HepG2 (cell line): ENCODE measurements at regions of chr1 and their contacts with region 1.

Region 1: GRCh38 chr1:213419369-213420030 is 368.5 kb downstream of the RPS6KC1 start:
- DNase-seq: peak; percentile 49
- ATAC-seq: peak; percentile 82
- H3K4me3 ChIP-seq: no peak overlapping the region
- H3K27ac ChIP-seq: no peak overlapping the region
- H3K4me1 ChIP-seq: peaks cover 42% of the 10 kb centered on the region
- H3K27me3 ChIP-seq: no peaks in the 10 kb centered on the region
- CTCF ChIP-seq: peak; percentile 59
- EP300 ChIP-seq: no peak
- POLR2A ChIP-seq: no peak
- RAD21 ChIP-seq: peak; percentile 64

Region 2: DNA sequence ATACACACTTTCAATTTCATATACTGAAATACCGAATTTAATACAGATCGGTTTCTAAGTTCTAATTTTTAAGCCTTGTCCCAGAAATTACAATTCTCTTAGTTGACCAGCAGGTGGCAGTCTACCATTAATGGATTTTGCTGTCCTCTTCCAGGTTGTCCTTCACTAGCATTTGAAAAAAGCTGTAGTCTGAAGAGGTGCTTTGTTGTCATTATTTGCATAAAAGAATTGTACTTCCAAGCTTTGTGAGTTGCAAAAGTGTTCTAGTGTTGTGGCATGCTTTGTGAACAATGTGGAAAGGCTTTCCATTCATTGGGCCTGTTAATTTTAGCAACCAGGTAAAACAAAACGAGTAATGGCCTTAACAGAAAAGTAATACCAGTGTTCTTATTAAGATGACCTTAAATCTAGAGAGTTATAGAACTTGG is 174.8 kb before region 1 on chr1:
- CTCF ChIA-PET with region 1: interaction called, 4 read pairs
- POLR2A ChIA-PET with region 1: no interaction called
- in situ Hi-C with region 1: loop called (anchors 5 kb)
- intact Hi-C with region 1: loop called (anchors 2 kb)
- DNase-seq: peak; percentile 73
- ATAC-seq: peak; percentile 54
- H3K4me3 ChIP-seq: no peak overlapping the region
- H3K27ac ChIP-seq: no peak overlapping the region
- H3K4me1 ChIP-seq: peaks cover 19% of the 10 kb centered on the region
- H3K27me3 ChIP-seq: no peaks in the 10 kb centered on the region
- CTCF ChIP-seq: peak; percentile 79
- EP300 ChIP-seq: no peak
- POLR2A ChIP-seq: no peak
- RAD21 ChIP-seq: peak; percentile 82

Region 3: DNA sequence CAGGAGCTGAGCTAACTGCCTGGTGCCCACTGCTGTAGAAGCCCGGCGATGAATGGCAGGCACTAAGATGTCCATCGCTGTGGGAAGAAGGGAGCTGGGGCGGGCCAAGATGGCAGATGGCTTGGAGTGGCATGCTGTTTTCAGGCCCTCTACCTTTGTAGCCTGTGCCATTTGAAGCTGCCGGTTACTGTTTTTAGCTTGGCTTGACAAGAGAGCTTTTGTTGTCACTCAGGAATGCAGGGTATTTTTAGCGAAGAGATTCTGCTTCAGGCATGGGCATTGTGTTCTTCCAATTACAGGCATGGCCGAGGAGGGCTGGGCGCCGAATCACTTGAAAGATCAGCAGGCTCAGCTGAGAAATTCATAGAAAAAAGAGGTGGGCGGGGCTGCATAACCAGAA is 19.8 kb before region 1 on chr1:
- CTCF ChIA-PET with region 1: no interaction called
- POLR2A ChIA-PET with region 1: no interaction called
- in situ Hi-C with region 1: no loop called
- intact Hi-C with region 1: no loop called
- DNase-seq: peak; percentile 76
- ATAC-seq: peak; percentile 43; the same call in 1 of the 3 replicates
- H3K4me3 ChIP-seq: no peak overlapping the region
- H3K27ac ChIP-seq: peak overlapping the region; percentile 40
- H3K4me1 ChIP-seq: peaks cover 56% of the 10 kb centered on the region
- H3K27me3 ChIP-seq: no peaks in the 10 kb centered on the region
- CTCF ChIP-seq: no peak
- EP300 ChIP-seq: no peak
- POLR2A ChIP-seq: no peak
- RAD21 ChIP-seq: no peak